GM12878 (cell line): ENCODE measurements at regions of chr5 and their contacts with region 1.

Region 1: DNA sequence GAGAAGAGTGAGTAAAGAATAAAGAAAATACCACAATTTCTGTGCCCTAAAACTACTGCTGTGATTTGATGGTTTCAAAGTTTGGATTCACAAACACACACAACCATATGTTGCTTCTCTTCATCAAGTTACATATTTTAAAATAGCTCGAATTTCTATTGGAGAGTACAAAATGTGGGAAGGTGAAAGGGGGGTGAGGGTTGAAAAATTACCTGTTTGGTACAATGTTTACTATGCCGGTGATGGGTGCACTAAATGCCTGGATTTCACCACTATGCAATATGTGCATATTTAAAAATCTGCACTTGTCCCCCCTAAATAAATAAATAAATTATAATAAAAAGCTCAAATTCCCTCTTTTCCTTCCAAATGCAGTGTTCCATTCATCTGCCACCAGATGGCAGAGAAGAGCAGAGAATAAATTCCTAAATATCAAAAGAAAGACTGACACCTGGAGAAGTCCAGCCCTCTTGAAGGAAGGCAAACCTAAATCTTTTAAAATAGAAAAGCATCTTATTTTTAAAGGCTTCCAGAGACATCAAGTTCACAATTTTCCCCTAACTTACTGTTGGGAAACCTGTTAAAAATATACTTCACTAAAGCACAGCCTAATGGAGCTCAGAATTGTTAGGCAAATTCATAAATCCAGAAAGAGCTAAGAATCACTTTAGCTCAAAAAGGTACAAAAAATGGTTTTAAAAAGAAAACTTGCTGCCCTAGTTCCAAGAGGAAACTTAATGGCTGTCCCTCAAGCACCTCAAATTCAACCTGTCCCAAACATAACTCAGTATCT is 24.8 kb upstream of the HNRNPA0 start:
- DNase-seq: no peak
- ATAC-seq: 0 out of 3 replicates have a peak, but pooled peaks have one; percentile 27
- H3K4me3 ChIP-seq: no peak overlapping the region
- H3K27ac ChIP-seq: no peak overlapping the region
- H3K4me1 ChIP-seq: peaks cover 3% of the 10 kb centered on the region; the same call in 1 of the 2 replicates
- H3K27me3 ChIP-seq: no peaks in the 10 kb centered on the region
- CTCF ChIP-seq: peak; percentile 63 to 65 (median 63)
- EP300 ChIP-seq: no peak
- POLR2A ChIP-seq: no peak
- RAD21 ChIP-seq: peak; percentile 94

Region 2: GRCh38 chr5:137743031-137743640 is 35.8 kb before region 1 on chr5:
- CTCF ChIA-PET with region 1: interaction called, 8 read pairs
- POLR2A ChIA-PET with region 1: no interaction called
- RAD21 ChIA-PET with region 1: no interaction called
- SMC1A ChIA-PET with region 1: interaction called, 10 read pairs
- in situ Hi-C with region 1: no loop called
- intact Hi-C with region 1: no loop called
- DNase-seq: no peak
- ATAC-seq: peak; percentile 84
- H3K4me3 ChIP-seq: no peak overlapping the region
- H3K27ac ChIP-seq: no peak overlapping the region
- H3K4me1 ChIP-seq: no peaks in the 10 kb centered on the region; the same call in 1 of the 2 replicates
- H3K27me3 ChIP-seq: no peaks in the 10 kb centered on the region
- CTCF ChIP-seq: peak; percentile 59 to 79 (median 69)
- EP300 ChIP-seq: no peak
- POLR2A ChIP-seq: no peak
- RAD21 ChIP-seq: peak; percentile 82

Region 3: GRCh38 chr5:137808503-137809205 is 29.7 kb after region 1 on chr5:
- CTCF ChIA-PET with region 1: interaction called, 24 read pairs
- POLR2A ChIA-PET with region 1: no interaction called
- RAD21 ChIA-PET with region 1: interaction called, 5 read pairs
- SMC1A ChIA-PET with region 1: interaction called, 10 read pairs
- in situ Hi-C with region 1: no loop called
- intact Hi-C with region 1: no loop called
- DNase-seq: no peak
- ATAC-seq: no peak
- H3K4me3 ChIP-seq: no peak overlapping the region
- H3K27ac ChIP-seq: no peak overlapping the region
- H3K4me1 ChIP-seq: no peaks in the 10 kb centered on the region
- H3K27me3 ChIP-seq: no peaks in the 10 kb centered on the region
- CTCF ChIP-seq: no peak
- EP300 ChIP-seq: no peak
- POLR2A ChIP-seq: no peak
- RAD21 ChIP-seq: no peak

Region 4: DNA sequence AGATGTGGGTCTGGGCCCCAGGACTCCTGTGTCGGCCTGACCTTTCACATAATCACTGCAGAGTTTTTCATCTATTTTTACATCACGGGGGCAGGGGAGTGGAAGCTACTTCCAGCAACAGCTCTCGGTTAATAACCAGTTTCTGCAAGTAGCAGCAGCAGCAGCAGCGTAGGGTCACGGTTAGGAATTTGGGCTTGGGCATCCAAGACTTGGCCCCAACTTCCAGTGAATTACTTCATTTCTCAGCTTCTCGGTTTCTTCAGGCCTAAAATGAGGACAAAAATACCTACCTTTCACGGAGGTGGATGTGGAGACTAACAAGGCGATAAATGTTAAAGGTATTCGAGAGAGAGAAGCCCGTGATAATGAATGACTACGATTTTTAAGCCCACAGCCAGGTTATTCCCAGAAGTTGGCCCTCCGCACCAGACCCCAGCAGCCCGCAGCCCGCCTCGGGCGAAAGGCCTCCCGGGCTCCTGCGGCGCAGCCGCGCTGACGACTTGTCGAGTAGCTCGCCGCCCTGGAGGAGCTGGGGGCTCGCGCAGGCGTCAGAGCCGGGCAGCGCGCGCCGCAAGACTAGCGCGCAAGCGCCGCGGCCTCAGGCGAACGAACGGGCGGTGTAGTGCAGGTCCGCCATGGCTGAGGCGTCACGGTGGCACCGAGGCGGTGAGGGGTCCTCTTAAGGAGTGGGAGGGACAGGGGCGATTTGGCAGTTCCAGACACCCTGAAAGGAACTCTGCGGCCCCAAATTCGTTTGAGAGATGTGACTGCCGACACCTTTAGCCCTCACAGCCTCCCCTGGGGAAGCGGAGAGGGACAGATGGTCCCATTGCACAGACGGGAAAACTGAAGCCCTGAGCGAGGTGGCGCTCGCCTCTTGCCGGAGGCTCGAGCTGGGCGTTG is 110.1 kb after region 1 on chr5 and contains the start of gene PKD2L2:
- CTCF ChIA-PET with region 1: interaction called, 85 read pairs
- POLR2A ChIA-PET with region 1: interaction called, 4 read pairs
- RAD21 ChIA-PET with region 1: interaction called, 47 read pairs
- SMC1A ChIA-PET with region 1: interaction called, 46 read pairs
- in situ Hi-C with region 1: no loop called
- intact Hi-C with region 1: loop called (anchors 1 kb)
- DNase-seq: peak; percentile 75
- ATAC-seq: peak; percentile 99
- H3K4me3 ChIP-seq: peak within 1 kb of the TSS; percentile 79
- H3K27ac ChIP-seq: peak within 1 kb of the TSS; percentile 84
- H3K4me1 ChIP-seq: no peaks in the 10 kb centered on the region
- H3K27me3 ChIP-seq: no peaks in the 10 kb centered on the region
- CTCF ChIP-seq: peak in 2 of 3 experiments; percentile 7 to 12; a peak in 1 of 6 replicates
- EP300 ChIP-seq: 0 out of 4 replicates have a peak, but pooled peaks of 1 of the 2 experiments have one; percentile 26
- POLR2A ChIP-seq: peak; percentile 99
- RAD21 ChIP-seq: no peak
- polyA plus RNA-seq, gene PKD2L2: 0.11 to 0.16 TPM

Region 5: GRCh38 chr5:137945825-137946224 is 166.9 kb after region 1 on chr5:
- CTCF ChIA-PET with region 1: interaction called, 15 read pairs
- POLR2A ChIA-PET with region 1: no interaction called
- RAD21 ChIA-PET with region 1: interaction called, 5 read pairs
- SMC1A ChIA-PET with region 1: interaction called, 6 read pairs
- in situ Hi-C with region 1: no loop called
- intact Hi-C with region 1: no loop called
- DNase-seq: no peak
- ATAC-seq: no peak
- H3K4me3 ChIP-seq: no peak overlapping the region
- H3K27ac ChIP-seq: no peak overlapping the region
- H3K4me1 ChIP-seq: no peaks in the 10 kb centered on the region
- H3K27me3 ChIP-seq: no peaks in the 10 kb centered on the region; a peak in 1 of 4 replicates
- CTCF ChIP-seq: no peak
- EP300 ChIP-seq: no peak
- POLR2A ChIP-seq: no peak
- RAD21 ChIP-seq: no peak

Region 6: DNA sequence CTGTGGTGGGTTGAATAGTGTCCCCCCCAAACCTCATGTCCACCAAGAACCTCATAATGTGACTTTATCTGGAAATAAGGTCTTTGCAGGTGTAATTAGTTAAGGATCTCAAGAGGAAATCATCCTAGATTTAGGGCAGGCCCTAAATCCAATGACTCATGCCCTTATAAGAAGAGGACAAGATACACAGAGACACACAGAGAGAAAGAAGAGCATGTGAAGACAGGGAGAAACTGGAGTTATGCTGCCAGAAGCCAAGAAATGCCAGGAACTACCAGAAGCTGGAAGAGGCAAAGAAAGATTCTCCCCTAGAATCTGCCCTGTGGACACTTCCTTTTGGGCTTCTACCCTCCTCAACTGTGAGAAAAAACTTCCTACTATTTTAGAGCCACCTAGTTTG is 245.1 kb after region 1 on chr5:
- CTCF ChIA-PET with region 1: interaction called, 28 read pairs
- POLR2A ChIA-PET with region 1: no interaction called
- RAD21 ChIA-PET with region 1: interaction called, 31 read pairs
- SMC1A ChIA-PET with region 1: interaction called, 22 read pairs
- in situ Hi-C with region 1: no loop called
- intact Hi-C with region 1: no loop called
- DNase-seq: no peak
- ATAC-seq: no peak
- H3K4me3 ChIP-seq: no peak overlapping the region
- H3K27ac ChIP-seq: no peak overlapping the region
- H3K4me1 ChIP-seq: peaks cover 13% of the 10 kb centered on the region
- H3K27me3 ChIP-seq: no peaks in the 10 kb centered on the region
- CTCF ChIP-seq: no peak
- EP300 ChIP-seq: no peak
- POLR2A ChIP-seq: no peak
- RAD21 ChIP-seq: no peak

Region 7: GRCh38 chr5:138128334-138128733 is 349.4 kb after region 1 on chr5:
- CTCF ChIA-PET with region 1: interaction called, 16 read pairs
- POLR2A ChIA-PET with region 1: interaction called, 7 read pairs
- RAD21 ChIA-PET with region 1: interaction called, 16 read pairs
- SMC1A ChIA-PET with region 1: interaction called, 26 read pairs
- in situ Hi-C with region 1: loop called (anchors 10 kb)
- intact Hi-C with region 1: loop called (anchors 2 kb)
- DNase-seq: no peak
- ATAC-seq: no peak
- H3K4me3 ChIP-seq: no peak overlapping the region
- H3K27ac ChIP-seq: no peak overlapping the region
- H3K4me1 ChIP-seq: no peaks in the 10 kb centered on the region
- H3K27me3 ChIP-seq: no peaks in the 10 kb centered on the region
- CTCF ChIP-seq: no peak
- EP300 ChIP-seq: no peak
- POLR2A ChIP-seq: no peak
- RAD21 ChIP-seq: no peak